ENCODE measurements at regions of chr1 and their contacts with region 1.

Region 1: GRCh38 chr1:198620951-198621824 is 17.7 kb upstream of the PTPRC start:
- DNase-seq: peak; percentile 77 to 87 (median 80)
- H3K4me3 ChIP-seq: peak overlapping the region; percentile 18 to 59
- H3K4me3 Mint-ChIP-seq: peak overlapping the region; percentile 73 to 92 (median 85)
- H3K27ac ChIP-seq: peak overlapping the region; percentile 73
- H3K27ac Mint-ChIP-seq: peak overlapping the region; percentile 91 to 98 (median 95)
- H3K4me1 ChIP-seq: peaks cover 100% of the 10 kb centered on the region
- H3K4me1 Mint-ChIP-seq: peaks cover 62 to 88% (median 79%) of the 10 kb centered on the region in 4 donors
- H3K27me3 ChIP-seq: no peaks in the 10 kb centered on the region
- H3K27me3 Mint-ChIP-seq: no peaks in the 10 kb centered on the region

Region 2: DNA sequence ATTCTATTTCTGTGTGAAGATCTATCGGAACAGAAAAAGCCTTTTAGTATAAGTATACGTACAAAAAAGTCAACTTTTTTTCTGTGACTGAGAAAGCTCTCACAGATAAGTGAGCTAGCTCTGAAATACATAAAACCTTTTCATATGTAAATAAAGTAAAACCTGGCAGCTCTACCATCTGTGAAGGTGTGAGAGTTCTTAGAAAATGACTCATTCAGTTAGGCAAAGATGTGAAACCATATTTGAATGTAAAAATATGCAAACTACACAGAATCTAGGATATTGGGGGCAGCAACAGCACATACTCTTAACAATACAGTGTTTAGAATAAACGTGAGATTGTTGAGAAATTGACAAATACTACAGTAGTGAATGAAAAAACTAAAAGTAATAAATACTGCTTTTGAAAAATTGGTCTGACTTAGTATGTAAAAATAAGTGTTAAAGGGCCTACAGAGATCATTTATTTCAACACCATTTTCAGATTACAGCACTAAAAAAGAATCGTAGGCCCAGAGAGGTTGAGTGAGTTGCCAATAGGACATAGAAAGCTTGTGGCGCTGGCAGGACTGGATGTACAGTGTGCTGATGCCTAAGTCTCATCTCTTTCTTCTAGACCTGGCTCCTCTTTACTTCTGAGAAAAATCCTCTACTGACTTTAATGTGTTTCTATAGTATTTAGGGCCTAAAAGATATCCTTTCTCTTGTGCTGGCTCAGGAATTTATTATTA is 100.5 kb before region 1 on chr1:
- CTCF ChIA-PET with region 1: interaction called, 32 read pairs
- POLR2A ChIA-PET with region 1: interaction called, 136 read pairs
- intact Hi-C with region 1: loop called (anchors 1 kb)
- DNase-seq: peak in 4 of 5 donors; percentile 18 to 44 (median 25)
- H3K4me3 ChIP-seq: peak overlapping the region; percentile 19 to 46
- H3K4me3 Mint-ChIP-seq: peak overlapping the region; percentile 77 to 90 (median 80)
- H3K27ac ChIP-seq: peak overlapping the region; percentile 57
- H3K27ac Mint-ChIP-seq: peak overlapping the region; percentile 81 to 94 (median 91)
- H3K4me1 ChIP-seq: peaks cover 82% of the 10 kb centered on the region
- H3K4me1 Mint-ChIP-seq: peaks cover 57 to 84% (median 64%) of the 10 kb centered on the region in 4 donors
- H3K27me3 ChIP-seq: no peaks in the 10 kb centered on the region
- H3K27me3 Mint-ChIP-seq: no peaks in the 10 kb centered on the region

Region 3: DNA sequence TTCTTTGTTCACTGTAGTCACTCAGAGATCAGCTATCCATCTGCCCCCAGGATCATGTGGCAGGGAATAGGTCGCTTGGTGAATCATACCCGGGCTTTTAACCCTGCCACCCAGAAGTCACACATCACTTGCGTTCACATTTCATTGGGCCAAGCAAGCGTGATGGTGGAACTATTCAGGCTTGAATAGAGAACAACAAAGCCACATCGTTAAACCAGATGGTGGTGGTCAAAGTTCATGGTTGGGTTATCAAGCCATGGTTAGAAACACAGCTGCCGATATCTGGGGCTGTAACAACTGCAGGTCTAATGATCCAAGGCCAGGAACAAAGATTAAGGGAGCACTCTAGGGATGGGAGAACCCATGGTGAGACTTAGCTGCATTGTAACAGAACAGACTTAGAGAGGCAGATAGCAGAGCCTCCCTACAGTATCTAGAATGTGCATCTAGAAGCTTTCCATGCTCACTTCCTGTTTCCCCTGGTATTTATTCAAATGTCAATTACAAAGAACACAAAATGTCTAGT is 22.3 kb before region 1 on chr1:
- CTCF ChIA-PET with region 1: interaction called, 9 read pairs
- POLR2A ChIA-PET with region 1: interaction called, 29 read pairs
- intact Hi-C with region 1: no loop called
- DNase-seq: no peak
- H3K4me3 ChIP-seq: no peak overlapping the region
- H3K4me3 Mint-ChIP-seq: peak overlapping the region; percentile 16 to 78 (median 60)
- H3K27ac ChIP-seq: no peak overlapping the region
- H3K27ac Mint-ChIP-seq: peak overlapping the region in 6 of 7 donors; percentile 69 to 92 (median 78)
- H3K4me1 ChIP-seq: peaks cover 57% of the 10 kb centered on the region
- H3K4me1 Mint-ChIP-seq: peaks cover 48 to 80% (median 63%) of the 10 kb centered on the region in 4 donors
- H3K27me3 ChIP-seq: no peaks in the 10 kb centered on the region
- H3K27me3 Mint-ChIP-seq: no peaks in the 10 kb centered on the region

Region 4: GRCh38 chr1:198638894-198639635 is 17.9 kb after region 1 on chr1 and contains the start of gene PTPRC:
- CTCF ChIA-PET with region 1: interaction called, 93 read pairs
- POLR2A ChIA-PET with region 1: interaction called, 494 read pairs
- intact Hi-C with region 1: loop called (anchors 1 kb)
- DNase-seq: peak in 4 of 5 donors; percentile 50 to 67 (median 60)
- H3K4me3 ChIP-seq: peak within 1 kb of the TSS; percentile 61 to 78
- H3K4me3 Mint-ChIP-seq: peak within 1 kb of the TSS; percentile 82 to 99 (median 94)
- H3K27ac ChIP-seq: peak within 1 kb of the TSS; percentile 83
- H3K27ac Mint-ChIP-seq: peak within 1 kb of the TSS; percentile 86 to 98 (median 95)
- H3K4me1 ChIP-seq: peaks cover 60% of the 10 kb centered on the region
- H3K4me1 Mint-ChIP-seq: peaks cover 34 to 46% (median 39%) of the 10 kb centered on the region in 4 donors
- H3K27me3 ChIP-seq: no peaks in the 10 kb centered on the region
- H3K27me3 Mint-ChIP-seq: no peaks in the 10 kb centered on the region
- total RNA-seq, gene PTPRC: 974 to 987 TPM

Region 5: DNA sequence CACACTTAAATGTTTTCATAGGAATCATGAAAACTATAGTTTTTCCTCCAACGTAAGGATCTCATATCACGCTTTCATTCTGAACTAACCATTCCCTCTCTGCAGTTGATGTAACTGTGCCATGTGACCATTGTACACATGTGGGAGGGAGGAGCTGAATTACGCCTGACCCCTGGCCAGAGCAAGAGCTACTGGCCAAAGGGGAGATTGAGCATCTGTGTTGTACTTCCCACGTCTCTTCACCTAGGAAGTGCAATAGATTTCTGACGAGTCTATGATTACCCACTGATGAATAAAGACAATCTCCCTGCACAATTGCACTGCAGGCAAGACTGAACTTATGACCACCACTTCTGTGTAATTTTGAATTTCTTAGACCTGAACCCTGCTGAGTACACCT is 41.6 kb after region 1 on chr1:
- CTCF ChIA-PET with region 1: interaction called, 17 read pairs
- POLR2A ChIA-PET with region 1: interaction called, 113 read pairs
- intact Hi-C with region 1: no loop called
- DNase-seq: no peak
- H3K4me3 ChIP-seq: peak overlapping the region; percentile 20 to 24
- H3K4me3 Mint-ChIP-seq: peak overlapping the region; percentile 75 to 85 (median 80)
- H3K27ac ChIP-seq: peak overlapping the region; percentile 69
- H3K27ac Mint-ChIP-seq: peak overlapping the region; percentile 88 to 96 (median 93)
- H3K4me1 ChIP-seq: peaks cover 95% of the 10 kb centered on the region
- H3K4me1 Mint-ChIP-seq: peaks cover 66 to 82% (median 76%) of the 10 kb centered on the region in 4 donors
- H3K27me3 ChIP-seq: no peaks in the 10 kb centered on the region
- H3K27me3 Mint-ChIP-seq: no peaks in the 10 kb centered on the region

Region 6: GRCh38 chr1:198699167-198700015 is 78.2 kb after region 1 on chr1:
- CTCF ChIA-PET with region 1: interaction called, 12 read pairs
- POLR2A ChIA-PET with region 1: interaction called, 21 read pairs
- intact Hi-C with region 1: no loop called
- DNase-seq: peak; percentile 60 to 72 (median 66)
- H3K4me3 ChIP-seq: no peak overlapping the region
- H3K4me3 Mint-ChIP-seq: peak overlapping the region in 6 of 8 donors; percentile 26 to 76 (median 52)
- H3K27ac ChIP-seq: peak overlapping the region; percentile 33
- H3K27ac Mint-ChIP-seq: peak overlapping the region; percentile 85 to 91 (median 87)
- H3K4me1 ChIP-seq: peaks cover 87% of the 10 kb centered on the region
- H3K4me1 Mint-ChIP-seq: peaks cover 59 to 82% (median 70%) of the 10 kb centered on the region in 4 donors
- H3K27me3 ChIP-seq: no peaks in the 10 kb centered on the region
- H3K27me3 Mint-ChIP-seq: no peaks in the 10 kb centered on the region

Region 7: DNA sequence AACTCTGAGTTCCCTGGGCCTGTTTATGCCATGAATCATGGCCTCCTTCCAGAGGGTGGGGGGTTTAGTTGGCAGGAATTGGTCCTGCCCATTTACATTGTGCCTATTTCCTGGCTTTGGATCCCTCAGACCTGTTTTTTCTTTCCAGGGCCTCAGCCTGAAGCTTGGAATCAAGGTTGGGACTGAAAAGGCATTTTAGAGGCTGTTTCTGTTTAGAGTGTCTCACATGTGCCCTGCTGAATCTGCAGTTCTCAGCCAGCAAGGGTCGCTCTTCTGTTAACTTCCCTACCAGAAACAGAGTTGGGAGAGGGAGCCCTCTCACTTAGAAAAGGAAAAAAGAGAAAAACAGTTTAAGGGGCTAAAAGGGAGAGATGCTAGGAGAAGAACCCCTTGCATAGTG is 208.8 kb after region 1 on chr1:
- CTCF ChIA-PET with region 1: no interaction called
- POLR2A ChIA-PET with region 1: no interaction called
- intact Hi-C with region 1: no loop called
- DNase-seq: peak in 1 of 5 donors; percentile 2
- H3K4me3 ChIP-seq: no peak overlapping the region
- H3K4me3 Mint-ChIP-seq: no peak overlapping the region
- H3K27ac ChIP-seq: no peak overlapping the region
- H3K27ac Mint-ChIP-seq: no peak overlapping the region
- H3K4me1 ChIP-seq: no peaks in the 10 kb centered on the region
- H3K4me1 Mint-ChIP-seq: no peaks in the 10 kb centered on the region
- H3K27me3 ChIP-seq: no peaks in the 10 kb centered on the region
- H3K27me3 Mint-ChIP-seq: no peaks in the 10 kb centered on the region